ENCODE measurements at regions of chr10 and their contacts with region 1.

Region 1: GRCh38 chr10:69408318-69409175 is 8.2 kb downstream of the TACR2 start:
- DNase-seq: peak; percentile 95
- ATAC-seq: peak; percentile 93
- H3K4me3 Mint-ChIP-seq: no peak overlapping the region
- H3K27ac Mint-ChIP-seq: peak overlapping the region; percentile 67
- H3K4me1 Mint-ChIP-seq: peaks cover 11% of the 10 kb centered on the region
- H3K27me3 Mint-ChIP-seq: no peaks in the 10 kb centered on the region

Region 2: GRCh38 chr10:68988530-68989316 is 419.8 kb before region 1 on chr10 and contains the start of gene KIFBP:
- CTCF ChIA-PET with region 1: no interaction called
- POLR2A ChIA-PET with region 1: no interaction called
- intact Hi-C with region 1: loop called in 1 of 2 experiments (anchors 2 kb)
- DNase-seq: peak; percentile 91
- ATAC-seq: peak; percentile 89
- H3K4me3 Mint-ChIP-seq: peak within 1 kb of the TSS; percentile 86
- H3K27ac Mint-ChIP-seq: peak within 1 kb of the TSS; percentile 86
- H3K4me1 Mint-ChIP-seq: peaks cover 51% of the 10 kb centered on the region
- H3K27me3 Mint-ChIP-seq: no peaks in the 10 kb centered on the region
- total RNA-seq, gene KIFBP: 12.9 to 15.6 TPM

Region 3: GRCh38 chr10:69179743-69180524 is 228.6 kb before region 1 on chr10 and contains the start of gene SUPV3L1:
- CTCF ChIA-PET with region 1: no interaction called
- POLR2A ChIA-PET with region 1: no interaction called
- intact Hi-C with region 1: loop called in 1 of 2 experiments (anchors 1 kb)
- DNase-seq: peak; percentile 91
- ATAC-seq: peak; percentile 89
- H3K4me3 Mint-ChIP-seq: peak within 1 kb of the TSS; percentile 90
- H3K27ac Mint-ChIP-seq: peak within 1 kb of the TSS; percentile 100
- H3K4me1 Mint-ChIP-seq: peaks cover 38% of the 10 kb centered on the region
- H3K27me3 Mint-ChIP-seq: no peaks in the 10 kb centered on the region
- total RNA-seq, gene SUPV3L1: 46.6 to 54.1 TPM

Region 4: GRCh38 chr10:69237528-69238159 is 170.9 kb before region 1 on chr10:
- CTCF ChIA-PET with region 1: interaction called, 15 read pairs
- POLR2A ChIA-PET with region 1: no interaction called
- intact Hi-C with region 1: loop called (anchors 1 to 5 kb)
- DNase-seq: peak; percentile 94
- ATAC-seq: peak; percentile 99
- H3K4me3 Mint-ChIP-seq: no peak overlapping the region
- H3K27ac Mint-ChIP-seq: no peak overlapping the region
- H3K4me1 Mint-ChIP-seq: peaks cover 22% of the 10 kb centered on the region
- H3K27me3 Mint-ChIP-seq: no peaks in the 10 kb centered on the region

Region 5: GRCh38 chr10:69392481-69393000 is 16.0 kb before region 1 on chr10:
- CTCF ChIA-PET with region 1: interaction called, 15 read pairs
- POLR2A ChIA-PET with region 1: interaction called, 6 read pairs
- intact Hi-C with region 1: no loop called
- DNase-seq: peak; percentile 89
- ATAC-seq: peak; percentile 95
- H3K4me3 Mint-ChIP-seq: no peak overlapping the region
- H3K27ac Mint-ChIP-seq: peak overlapping the region; percentile 67
- H3K4me1 Mint-ChIP-seq: peaks cover 19% of the 10 kb centered on the region
- H3K27me3 Mint-ChIP-seq: no peaks in the 10 kb centered on the region

Region 6: DNA sequence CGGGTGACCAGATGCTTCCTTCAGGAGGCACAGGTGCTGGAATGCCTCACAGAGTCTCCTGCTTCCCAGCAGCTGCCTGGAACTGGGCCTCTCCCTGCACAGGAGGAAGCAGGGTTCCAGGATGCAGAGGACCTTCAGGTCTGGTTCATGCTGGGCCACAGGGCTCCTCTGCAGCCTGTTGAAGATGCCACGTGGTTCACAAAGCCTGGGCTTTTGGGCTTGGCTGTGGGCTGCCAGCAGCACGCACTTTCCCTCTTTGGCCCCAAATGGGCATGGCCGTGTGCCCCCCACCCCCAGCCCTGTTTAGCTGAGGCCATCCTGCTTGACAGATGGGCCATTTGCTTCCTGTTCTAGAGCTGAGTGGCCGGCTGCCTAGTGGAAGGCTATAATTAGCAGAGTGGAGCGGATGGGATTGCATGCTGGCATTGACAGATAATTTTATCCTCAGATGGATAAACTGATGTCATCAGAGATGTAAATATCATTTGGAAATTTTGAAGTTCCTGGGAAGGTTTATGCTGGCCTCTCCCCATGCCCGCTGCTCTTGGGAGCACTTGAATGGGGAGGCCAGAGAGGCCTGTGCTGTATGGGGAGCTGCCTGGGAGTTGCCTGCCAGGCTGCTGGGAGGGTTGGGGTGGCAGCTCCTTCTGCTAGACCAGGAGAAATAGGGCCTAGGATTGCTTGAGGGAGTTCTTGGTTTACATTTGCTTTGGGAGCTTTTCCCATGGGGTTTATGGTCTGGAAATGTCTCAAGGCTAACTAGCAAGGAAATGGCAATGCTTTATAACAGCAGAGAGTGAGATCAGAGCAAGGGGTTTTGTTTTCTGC is 70.9 kb after region 1 on chr10:
- CTCF ChIA-PET with region 1: no interaction called
- POLR2A ChIA-PET with region 1: no interaction called
- intact Hi-C with region 1: no loop called
- DNase-seq: no peak
- ATAC-seq: no peak
- H3K4me3 Mint-ChIP-seq: no peak overlapping the region
- H3K27ac Mint-ChIP-seq: no peak overlapping the region
- H3K4me1 Mint-ChIP-seq: no peaks in the 10 kb centered on the region
- H3K27me3 Mint-ChIP-seq: no peaks in the 10 kb centered on the region

Region 7: GRCh38 chr10:69506834-69507721 is 98.5 kb after region 1 on chr10:
- CTCF ChIA-PET with region 1: interaction called, 15 read pairs
- POLR2A ChIA-PET with region 1: interaction called, 3 read pairs
- intact Hi-C with region 1: loop called (anchors 1 kb)
- DNase-seq: peak; percentile 17
- ATAC-seq: peak; percentile 33
- H3K4me3 Mint-ChIP-seq: peak overlapping the region; percentile 60
- H3K27ac Mint-ChIP-seq: peak overlapping the region; percentile 89
- H3K4me1 Mint-ChIP-seq: peaks cover 11% of the 10 kb centered on the region
- H3K27me3 Mint-ChIP-seq: no peaks in the 10 kb centered on the region

Region 8: GRCh38 chr10:69600761-69601330 is 192.3 kb after region 1 on chr10:
- CTCF ChIA-PET with region 1: no interaction called
- POLR2A ChIA-PET with region 1: no interaction called
- intact Hi-C with region 1: no loop called
- DNase-seq: no peak
- ATAC-seq: no peak
- H3K4me3 Mint-ChIP-seq: no peak overlapping the region
- H3K27ac Mint-ChIP-seq: no peak overlapping the region
- H3K4me1 Mint-ChIP-seq: no peaks in the 10 kb centered on the region
- H3K27me3 Mint-ChIP-seq: peaks cover 21% of the 10 kb centered on the region

Measured in activated CD4-positive, alpha-beta T cell treated with anti-CD3 and anti-CD28 coated beads for 36 hours (primary cell).